SK-N-SH (cell line): ENCODE measurements at regions of chr16 and their contacts with region 1.

Region 1: GRCh38 chr16:27154705-27155521 is 48.4 kb upstream of the KDM8 start:
- DNase-seq: peak; percentile 77
- H3K4me3 ChIP-seq: peak overlapping the region in 1 of 2 experiments; percentile 34; a peak in 1 of 4 replicates
- H3K27ac ChIP-seq: no peak overlapping the region
- H3K4me1 ChIP-seq: peaks cover 0 to 32% of the 10 kb centered on the region in 2 experiments; a peak in 1 of 4 replicates
- H3K27me3 ChIP-seq: no peaks in the 10 kb centered on the region
- CTCF ChIP-seq: peak; percentile 97
- EP300 ChIP-seq: no peak
- RAD21 ChIP-seq: peak; percentile 65

Region 2: GRCh38 chr16:27169511-27170071 is 14.7 kb after region 1 on chr16:
- CTCF ChIA-PET with region 1: interaction called, 68 read pairs
- POLR2A ChIA-PET with region 1: no interaction called
- DNase-seq: peak; percentile 29
- H3K4me3 ChIP-seq: no peak overlapping the region
- H3K27ac ChIP-seq: no peak overlapping the region
- H3K4me1 ChIP-seq: peaks cover 0 to 19% of the 10 kb centered on the region in 2 experiments; a peak in 2 of 4 replicates
- H3K27me3 ChIP-seq: no peaks in the 10 kb centered on the region
- CTCF ChIP-seq: peak; percentile 16; the same call in 1 of the 2 replicates
- EP300 ChIP-seq: no peak
- RAD21 ChIP-seq: peak; percentile 52

Region 3: DNA sequence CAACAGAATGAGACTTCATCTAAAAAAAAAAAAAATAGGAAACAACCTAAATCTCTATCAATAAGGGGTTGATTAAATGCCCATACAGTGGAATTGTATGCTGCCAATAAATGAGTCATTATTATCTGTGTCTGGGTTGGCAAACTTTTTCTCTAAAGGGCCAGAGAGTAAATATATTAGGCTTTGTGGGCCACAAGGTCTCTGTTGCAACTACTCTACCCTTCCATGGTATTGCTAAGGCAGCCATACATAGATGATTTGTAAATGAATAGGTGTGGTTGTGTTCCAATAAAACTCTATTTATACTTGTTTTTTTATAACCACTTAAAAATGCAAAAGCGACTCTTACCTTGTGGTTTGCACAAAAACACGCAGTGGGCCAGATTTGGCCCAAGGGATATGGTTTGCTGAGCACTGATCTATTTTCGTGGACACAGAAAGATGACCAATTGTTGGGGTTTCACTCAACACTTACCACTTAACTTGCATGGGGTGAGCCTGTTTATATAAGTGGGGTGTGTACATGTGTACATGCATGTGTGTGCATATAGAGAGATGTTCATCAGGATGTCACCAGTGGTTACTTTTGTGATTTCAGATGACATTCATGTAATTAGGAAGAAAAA is 146.4 kb after region 1 on chr16:
- CTCF ChIA-PET with region 1: no interaction called
- POLR2A ChIA-PET with region 1: no interaction called
- DNase-seq: no peak
- H3K4me3 ChIP-seq: no peak overlapping the region
- H3K27ac ChIP-seq: no peak overlapping the region
- H3K4me1 ChIP-seq: no peaks in the 10 kb centered on the region
- H3K27me3 ChIP-seq: no peaks in the 10 kb centered on the region
- CTCF ChIP-seq: no peak
- EP300 ChIP-seq: no peak
- RAD21 ChIP-seq: no peak